ENCODE measurements at regions of chr16 and their contacts with region 1.

Region 1: DNA sequence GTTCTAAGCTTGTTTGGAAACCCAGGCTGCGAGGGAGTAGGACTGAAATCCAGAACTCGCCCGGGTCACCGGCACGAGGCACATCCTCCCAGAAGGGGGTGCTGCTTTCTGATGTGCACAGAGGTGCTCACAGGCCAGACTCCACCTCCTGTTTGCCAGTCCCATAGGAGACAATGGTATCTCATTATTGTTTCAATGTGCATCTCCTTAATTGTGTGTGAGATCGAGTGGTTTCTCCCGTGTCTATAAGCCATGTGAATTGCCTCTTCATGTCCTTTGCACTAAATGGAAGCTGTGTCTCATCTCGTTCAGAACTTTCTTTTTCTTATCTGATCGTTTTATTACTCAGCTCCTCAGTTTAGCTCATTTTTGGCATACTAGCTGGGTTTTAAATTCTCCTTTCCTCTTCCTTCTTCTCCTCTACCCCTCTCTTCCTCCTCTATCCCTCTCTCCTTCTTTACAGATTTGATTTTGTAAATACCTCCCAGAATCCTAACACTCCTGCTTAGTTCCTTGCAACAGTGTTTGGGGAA is 32.1 kb upstream of the PRKCB start:
- DNase-seq: peak; percentile 46
- H3K4me3 ChIP-seq: no peak overlapping the region
- H3K27ac ChIP-seq: no peak overlapping the region
- H3K4me1 ChIP-seq: no peaks in the 10 kb centered on the region
- H3K27me3 ChIP-seq: no peaks in the 10 kb centered on the region
- CTCF ChIP-seq: peak in 3 of 4 experiments; percentile 26 to 59 (median 45)
- POLR2A ChIP-seq: no peak

Region 2: DNA sequence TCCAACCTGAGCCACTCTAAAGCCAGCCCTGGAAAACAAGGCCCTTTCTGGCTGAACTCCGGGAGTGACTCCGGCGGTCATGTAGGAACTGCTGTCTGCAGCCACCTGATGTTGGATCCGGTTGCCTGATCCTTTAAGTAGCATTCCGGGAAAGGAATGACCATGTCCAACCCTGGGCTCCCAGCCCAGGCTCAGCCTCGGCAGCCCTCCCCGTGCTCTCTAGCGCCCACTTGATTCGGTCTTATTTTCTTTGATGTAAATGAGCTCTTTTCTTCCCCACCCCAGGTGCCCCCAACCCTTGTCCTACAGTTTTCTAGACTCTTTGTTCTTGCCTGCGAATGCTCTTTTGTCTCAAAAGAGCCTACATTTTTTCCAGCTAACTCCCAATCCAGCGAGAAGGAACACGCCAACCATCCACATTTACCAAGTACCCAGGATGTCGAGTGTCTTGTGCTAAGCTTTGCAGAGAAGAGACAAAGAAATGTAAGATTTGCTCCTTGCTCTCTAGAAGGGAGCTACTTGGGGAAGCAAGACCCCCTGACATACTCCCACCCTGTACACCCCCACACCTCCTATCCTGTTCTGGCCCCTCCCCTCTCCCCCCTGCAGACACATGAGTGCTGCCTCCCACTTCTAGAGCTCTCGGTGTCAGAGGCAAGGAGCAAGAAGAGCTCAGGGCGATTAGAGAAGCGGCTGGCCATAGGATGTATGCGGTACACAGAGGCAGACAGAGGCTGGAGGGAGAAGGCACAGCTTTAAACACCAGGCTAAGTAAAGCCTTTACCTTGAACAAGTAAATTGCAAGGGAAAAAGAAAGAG is 404.5 kb before region 1 on chr16:
- intact Hi-C with region 1: no loop called
- DNase-seq: peak; percentile 29
- H3K4me3 ChIP-seq: no peak overlapping the region
- H3K27ac ChIP-seq: no peak overlapping the region
- H3K4me1 ChIP-seq: no peaks in the 10 kb centered on the region
- H3K27me3 ChIP-seq: no peaks in the 10 kb centered on the region
- CTCF ChIP-seq: no peak
- POLR2A ChIP-seq: no peak

Region 3: DNA sequence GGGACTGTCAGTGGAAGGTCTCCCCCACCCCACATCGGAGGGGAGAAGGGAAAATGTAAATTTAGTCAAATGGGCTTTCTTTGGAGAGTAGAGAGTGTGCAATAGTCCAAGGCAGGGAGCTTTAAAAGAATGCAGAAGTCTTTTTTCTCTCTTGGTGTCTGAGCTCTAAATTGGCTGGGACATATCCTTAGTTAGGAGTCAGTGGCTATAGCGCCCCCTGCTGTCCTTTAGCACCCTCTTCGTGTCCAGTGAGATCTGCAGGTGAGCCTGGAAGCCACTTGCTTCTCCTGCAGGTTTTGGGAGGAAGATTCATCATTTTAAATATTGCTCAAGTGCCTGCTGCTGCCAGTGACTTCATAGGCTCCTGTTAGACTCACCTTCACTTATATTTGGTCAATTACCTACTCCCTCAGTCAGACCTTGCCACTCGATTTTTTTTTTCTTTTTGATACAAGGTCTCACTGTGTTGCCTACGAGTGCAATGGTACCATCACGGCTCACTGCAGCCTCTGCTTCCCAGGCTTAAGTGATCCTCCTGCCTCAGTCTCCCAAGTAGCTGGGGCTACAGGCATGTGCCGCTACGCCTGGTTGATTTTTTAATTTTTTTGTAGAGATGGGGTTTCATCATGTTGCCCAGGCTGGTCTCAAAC is 206.9 kb after region 1 on chr16:
- intact Hi-C with region 1: loop called (anchors 2 kb)
- DNase-seq: peak; percentile 83
- H3K4me3 ChIP-seq: no peak overlapping the region
- H3K27ac ChIP-seq: no peak overlapping the region
- H3K4me1 ChIP-seq: no peaks in the 10 kb centered on the region
- H3K27me3 ChIP-seq: no peaks in the 10 kb centered on the region
- CTCF ChIP-seq: peak; percentile 44 to 85 (median 72)
- POLR2A ChIP-seq: no peak

Region 4: GRCh38 chr16:24504472-24505345 is 701.1 kb after region 1 on chr16:
- intact Hi-C with region 1: loop called (anchors 5 kb)
- DNase-seq: peak; percentile 22
- H3K4me3 ChIP-seq: no peak overlapping the region
- H3K27ac ChIP-seq: no peak overlapping the region
- H3K4me1 ChIP-seq: no peaks in the 10 kb centered on the region
- H3K27me3 ChIP-seq: no peaks in the 10 kb centered on the region
- CTCF ChIP-seq: peak in 3 of 4 experiments; percentile 54 to 64 (median 57)
- POLR2A ChIP-seq: no peak